ENCODE measurements at regions of chr7 and their contacts with region 1.

Region 1: DNA sequence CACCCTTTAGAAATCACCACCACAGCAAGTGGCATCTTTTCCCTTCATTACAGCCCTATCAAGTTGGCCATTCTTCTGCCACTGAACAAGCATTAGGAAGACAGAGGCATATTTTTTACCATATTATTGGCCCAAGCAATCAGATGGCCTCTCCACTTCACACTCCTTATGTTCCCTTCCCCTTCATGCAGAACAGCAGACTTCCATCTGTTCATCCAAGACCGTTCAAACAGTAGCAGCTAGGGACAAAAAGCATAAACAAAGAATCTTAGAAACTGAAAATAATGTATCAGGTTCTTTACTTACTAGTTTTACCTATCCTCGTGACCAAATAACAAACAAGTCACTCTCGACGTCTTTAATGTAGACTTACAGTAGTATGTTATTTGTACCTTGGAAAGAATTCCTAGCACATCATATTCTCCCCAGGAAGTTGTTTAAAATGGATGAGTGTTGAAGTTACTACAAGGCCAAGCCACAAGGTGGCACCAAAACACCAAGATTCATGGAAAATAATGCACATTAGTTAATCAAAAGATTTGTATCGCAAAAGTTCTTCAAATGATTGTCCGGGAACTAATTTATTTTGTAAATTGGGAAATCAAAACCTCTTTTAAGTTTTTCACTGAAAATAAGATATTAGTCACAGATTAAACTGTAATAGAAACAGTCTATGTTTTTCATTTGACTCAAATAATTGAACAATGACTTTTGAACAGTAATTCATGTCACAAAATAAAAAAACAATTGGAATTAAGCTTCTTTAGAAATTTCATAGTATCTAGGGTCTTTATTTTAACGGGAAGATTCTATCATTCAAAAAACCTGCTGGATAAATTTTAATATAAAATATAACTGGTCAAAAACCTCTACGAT is 112.1 kb downstream of the VPS41 start:
- DNase-seq: peak in 1 of 2 donors; percentile 76
- H3K4me3 ChIP-seq: no peak overlapping the region
- H3K27ac ChIP-seq: no peak overlapping the region
- H3K4me1 ChIP-seq: no peaks in the 10 kb centered on the region
- H3K27me3 ChIP-seq: no peaks in the 10 kb centered on the region
- CTCF ChIP-seq: peak; percentile 56 to 86 (median 75)

Region 2: DNA sequence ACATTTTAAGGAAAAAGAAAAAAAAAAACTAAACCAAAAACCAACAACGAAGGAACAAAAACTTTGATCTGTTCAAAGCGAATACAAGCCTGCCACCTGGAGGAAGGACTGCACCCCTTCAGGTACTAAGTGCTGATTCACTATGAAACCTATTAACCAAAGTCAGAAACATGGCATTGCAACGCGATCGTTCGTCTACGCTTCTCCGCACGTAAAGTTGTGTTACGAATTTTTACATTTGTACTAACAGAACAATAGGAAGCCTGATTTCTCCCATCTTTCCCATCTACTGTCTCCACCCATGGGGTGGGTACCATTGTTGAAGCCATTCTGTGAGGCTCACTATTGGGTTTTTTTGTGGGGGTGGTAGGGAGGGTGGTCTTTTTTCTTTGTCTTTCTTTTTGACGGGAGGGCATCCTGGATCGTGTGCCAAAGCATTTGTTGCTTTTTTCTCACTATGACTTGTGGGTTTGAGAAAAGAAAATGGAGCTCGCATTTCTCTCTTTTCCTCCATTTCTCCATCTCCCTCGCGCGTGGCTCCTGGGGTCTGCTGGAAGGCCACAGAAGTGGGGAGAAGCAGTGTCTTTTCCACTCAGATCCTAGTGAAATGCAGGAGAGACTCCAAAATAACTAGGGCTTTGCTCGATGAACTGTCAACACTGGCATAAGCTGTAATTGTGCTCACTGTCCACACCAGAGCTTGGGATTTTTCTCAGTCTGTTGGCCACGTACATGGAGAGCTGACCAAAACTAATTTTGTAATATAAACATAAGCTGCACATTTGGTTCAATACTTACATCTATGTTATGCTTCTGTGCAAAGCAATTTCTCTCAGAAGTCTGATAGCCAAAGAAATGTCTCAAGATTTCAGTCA is 668.4 kb after region 1 on chr7:
- intact Hi-C with region 1: loop called (anchors 1 kb)
- DNase-seq: peak in 1 of 2 donors; percentile 67
- H3K4me3 ChIP-seq: peak overlapping the region; percentile 8 to 25
- H3K27ac ChIP-seq: no peak overlapping the region
- H3K4me1 ChIP-seq: no peaks in the 10 kb centered on the region
- H3K27me3 ChIP-seq: no peaks in the 10 kb centered on the region
- CTCF ChIP-seq: peak; percentile 53 to 84 (median 81)

Region 3: GRCh38 chr7:39517240-39517639 is 720.4 kb after region 1 on chr7:
- intact Hi-C with region 1: loop called (anchors 1 kb)
- DNase-seq: no peak
- H3K4me3 ChIP-seq: no peak overlapping the region
- H3K27ac ChIP-seq: no peak overlapping the region
- H3K4me1 ChIP-seq: no peaks in the 10 kb centered on the region
- H3K27me3 ChIP-seq: no peaks in the 10 kb centered on the region
- CTCF ChIP-seq: no peak

Region 4: DNA sequence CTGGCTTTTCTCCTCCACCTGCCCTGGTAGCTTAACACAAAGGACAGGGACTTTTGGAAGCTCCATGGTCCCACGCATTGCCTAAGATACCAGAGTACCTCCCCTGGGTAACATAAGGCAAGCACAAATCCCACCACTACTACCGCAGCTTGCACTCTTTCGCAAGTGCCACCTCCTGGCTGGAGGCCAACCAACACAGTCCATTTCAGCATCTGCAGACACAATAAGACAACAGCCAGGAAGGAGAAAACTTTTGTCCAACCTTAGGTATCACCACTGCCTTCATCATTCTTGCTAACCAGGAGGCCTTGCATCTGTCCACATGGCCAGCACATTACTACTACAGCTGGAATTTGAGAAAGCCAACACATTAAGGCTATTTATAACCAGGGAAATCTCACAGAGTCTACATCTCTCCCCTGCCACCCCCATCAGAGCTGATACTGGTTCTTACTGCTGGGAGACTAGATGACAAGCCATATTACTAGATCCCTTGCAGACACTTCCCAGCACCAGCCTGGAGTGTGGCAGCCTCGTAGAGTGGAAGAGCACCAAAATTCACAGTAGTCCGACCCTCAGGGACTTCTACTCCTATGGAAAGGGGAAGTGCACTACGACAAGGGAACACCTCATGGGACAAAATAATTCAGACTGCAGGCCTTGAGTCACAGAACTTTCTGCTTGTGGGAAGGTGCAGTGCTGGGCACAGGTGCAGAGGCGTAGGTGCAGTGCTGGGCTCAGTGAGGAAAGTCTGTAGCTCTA is 1113.4 kb after region 1 on chr7:
- intact Hi-C with region 1: no loop called
- DNase-seq: no peak
- H3K4me3 ChIP-seq: no peak overlapping the region
- H3K27ac ChIP-seq: no peak overlapping the region
- H3K4me1 ChIP-seq: no peaks in the 10 kb centered on the region
- H3K27me3 ChIP-seq: no peaks in the 10 kb centered on the region
- CTCF ChIP-seq: no peak

Measured in ascending aorta (tissue), 2 donors.